Activated T-helper 2 cell treated with anti-CD3 and anti-CD28 coated beads, Interferon-gamma antibody, Interleukin-2, Interleukin-4, amounts not matched to agents 10 μg/mL and 5 μg/mL and 100 μg/mL, durations not matched to agents 14 hours and 24 hours and 36 hours (primary cell): ENCODE measurements at regions of chr5 and their contacts with region 1.

Region 1: GRCh38 chr5:10701567-10702039 is 59.4 kb downstream of the DAP start:
- DNase-seq: no peak
- H3K4me3 Mint-ChIP-seq: no peak overlapping the region
- H3K27ac Mint-ChIP-seq: no peak overlapping the region
- H3K4me1 Mint-ChIP-seq: peaks cover 29% of the 10 kb centered on the region
- H3K27me3 Mint-ChIP-seq: no peaks in the 10 kb centered on the region

Region 2: GRCh38 chr5:10775646-10776045 is 74.0 kb after region 1 on chr5:
- intact Hi-C with region 1: loop called (anchors 5 kb)
- DNase-seq: no peak
- H3K4me3 Mint-ChIP-seq: no peak overlapping the region
- H3K27ac Mint-ChIP-seq: no peak overlapping the region
- H3K4me1 Mint-ChIP-seq: no peaks in the 10 kb centered on the region
- H3K27me3 Mint-ChIP-seq: peaks cover 24% of the 10 kb centered on the region